Left cardiac atrium (tissue), 4 donors: ENCODE measurements at regions of chr9 and their contacts with region 1.

Region 1: GRCh38 chr9:91775011-91775707 is 174.9 kb downstream of the ROR2 start:
- DNase-seq: peak; percentile 56
- ATAC-seq: peak; percentile 55 to 69

Region 2: DNA sequence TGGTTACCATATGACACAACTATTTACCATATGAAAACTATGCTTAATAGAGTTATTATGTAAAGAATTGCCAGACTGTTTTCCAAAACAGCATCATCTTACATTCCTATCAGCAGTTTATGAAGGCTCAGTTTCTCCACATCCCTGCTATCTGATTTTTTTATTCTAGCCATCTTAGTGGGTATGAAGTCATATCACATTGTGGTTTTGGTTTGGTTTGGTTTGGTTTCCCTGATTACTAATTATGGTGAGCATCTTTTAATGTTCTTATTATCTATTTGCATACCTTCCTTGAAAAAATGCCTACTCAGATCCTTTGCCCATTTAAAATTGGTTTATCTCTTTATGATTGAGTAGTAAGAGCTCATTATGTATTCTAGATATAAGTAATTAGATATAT is 152.2 kb before region 1 on chr9:
- intact Hi-C with region 1: no loop called
- DNase-seq: no peak
- ATAC-seq: no peak

Region 3: GRCh38 chr9:91690540-91691253 is 84.5 kb before region 1 on chr9:
- intact Hi-C with region 1: loop called in 1 of 2 experiments (anchors 10 kb)
- DNase-seq: no peak
- ATAC-seq: no peak

Region 4: GRCh38 chr9:91711755-91712601 is 63.2 kb before region 1 on chr9:
- intact Hi-C with region 1: no loop called
- DNase-seq: no peak
- ATAC-seq: no peak

Region 5: GRCh38 chr9:91966503-91966902 is 191.3 kb after region 1 on chr9:
- intact Hi-C with region 1: loop called in 1 of 2 experiments (anchors 10 kb)
- DNase-seq: no peak
- ATAC-seq: no peak

Region 6: GRCh38 chr9:92035687-92036410 is 260.7 kb after region 1 on chr9:
- intact Hi-C with region 1: no loop called
- DNase-seq: peak; percentile 31
- ATAC-seq: peak; percentile 61 to 86